Endothelial cell of umbilical vein (primary cell): ENCODE measurements at regions of chr17 and their contacts with region 1.

Region 1: DNA sequence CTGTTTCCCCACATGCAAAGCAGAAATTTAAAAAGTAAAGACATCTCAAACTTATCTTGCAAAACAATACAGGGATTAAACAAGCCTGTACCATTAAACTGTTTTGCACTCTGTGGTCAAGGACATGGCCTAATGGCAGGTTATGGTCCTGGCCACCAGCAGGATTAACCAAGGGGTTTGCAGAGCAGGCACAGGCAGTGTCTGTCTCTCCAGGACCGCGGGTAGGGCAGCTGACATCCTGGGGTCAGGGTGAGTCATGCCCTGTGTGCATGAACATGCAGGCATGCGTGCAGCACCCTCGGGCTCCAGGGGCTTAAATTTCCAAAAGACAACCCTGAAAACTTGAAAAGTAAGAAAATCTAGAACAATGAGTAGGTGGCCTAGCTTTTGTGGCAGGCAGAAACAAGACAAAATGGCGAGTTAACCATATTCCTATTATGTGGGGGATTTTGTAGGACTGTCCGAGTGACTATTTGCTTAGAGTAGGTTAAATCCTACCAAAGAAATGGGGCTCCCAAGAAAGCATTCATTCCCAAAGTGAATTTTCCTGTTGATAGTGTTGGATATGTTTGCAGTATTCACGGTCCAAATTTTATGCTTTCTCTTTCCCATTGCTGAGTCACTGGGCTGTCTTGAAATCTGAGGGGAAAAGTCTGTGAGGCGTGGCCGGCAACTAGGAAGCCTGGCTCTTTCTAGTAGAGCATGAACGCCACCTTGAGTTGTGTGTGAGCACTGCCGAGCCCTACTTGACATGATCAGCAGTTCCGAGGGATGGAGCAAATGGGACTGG is 158.4 kb upstream of the FAM20A start:
- DNase-seq: peak; percentile 91
- H3K4me3 ChIP-seq: peak overlapping the region; percentile 17 to 89 (median 73)
- H3K27ac ChIP-seq: peak overlapping the region; percentile 90
- H3K4me1 ChIP-seq: peaks cover 9% of the 10 kb centered on the region
- H3K27me3 ChIP-seq: no peaks in the 10 kb centered on the region
- CTCF ChIP-seq: peak; percentile 92 to 93
- POLR2A ChIP-seq: no peak

Region 2: DNA sequence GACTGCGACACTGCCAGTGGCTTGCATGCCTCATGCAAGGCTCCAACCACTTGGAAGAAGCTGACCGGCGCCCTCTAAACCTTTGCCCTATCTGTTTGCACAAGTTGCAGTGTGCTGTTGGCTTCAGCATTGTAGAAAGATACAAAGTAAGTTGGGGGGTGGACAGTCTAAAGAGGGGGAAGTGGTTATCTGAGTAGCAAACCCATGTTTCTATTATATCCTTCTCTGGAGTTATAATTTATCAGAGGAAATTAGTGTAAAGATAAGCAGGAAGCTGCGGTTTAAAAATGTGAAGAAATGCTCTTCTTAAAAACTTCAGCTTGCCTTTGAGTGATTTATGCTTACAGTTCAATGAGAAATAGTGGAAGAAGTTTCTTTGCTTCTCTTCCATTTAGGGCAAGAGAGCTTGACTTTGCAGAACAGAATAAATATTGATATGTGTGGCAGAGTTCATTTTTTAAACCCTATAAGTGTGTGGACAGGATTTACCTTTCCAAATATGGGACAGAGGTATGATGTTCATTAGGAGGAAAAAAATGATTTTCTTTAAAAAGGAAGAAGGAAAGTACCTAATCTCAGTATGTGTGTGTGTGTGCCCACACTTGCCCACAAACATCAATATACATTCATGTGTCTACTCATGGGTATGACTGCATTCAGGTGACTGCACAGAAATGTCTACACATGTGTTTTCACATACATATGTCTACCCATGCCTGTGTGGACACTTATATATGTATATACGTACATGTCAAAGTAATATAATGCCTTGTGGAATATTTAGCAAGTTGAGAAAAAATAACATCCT is 503.6 kb before region 1 on chr17:
- CTCF ChIA-PET with region 1: no interaction called
- POLR2A ChIA-PET with region 1: no interaction called
- dilution Hi-C with region 1: no loop called
- intact Hi-C with region 1: loop called (anchors 5 kb)
- DNase-seq: no peak
- H3K4me3 ChIP-seq: no peak overlapping the region
- H3K27ac ChIP-seq: no peak overlapping the region
- H3K4me1 ChIP-seq: peaks cover 20% of the 10 kb centered on the region
- H3K27me3 ChIP-seq: no peaks in the 10 kb centered on the region
- CTCF ChIP-seq: no peak
- POLR2A ChIP-seq: no peak

Region 3: DNA sequence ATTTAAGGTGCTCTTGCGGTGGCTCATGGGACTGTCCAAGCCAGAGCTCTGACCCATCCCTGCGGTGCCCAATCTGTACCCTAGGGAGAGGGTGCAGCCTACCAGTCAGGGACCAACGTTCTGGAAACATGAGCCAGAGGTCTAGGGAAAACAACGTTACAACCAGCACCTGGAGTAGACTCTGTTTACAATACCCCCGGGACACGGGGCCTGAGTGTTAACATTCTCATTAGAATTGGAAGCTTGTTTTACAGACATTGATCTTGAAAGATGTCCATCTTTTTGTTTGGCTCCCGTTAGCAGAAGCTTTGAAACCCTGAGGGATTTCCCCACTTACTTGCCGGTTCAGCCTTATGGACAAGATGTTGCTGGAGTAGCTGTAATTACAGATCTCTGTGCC is 309.1 kb before region 1 on chr17:
- CTCF ChIA-PET with region 1: no interaction called
- POLR2A ChIA-PET with region 1: no interaction called
- dilution Hi-C with region 1: no loop called
- intact Hi-C with region 1: no loop called
- DNase-seq: no peak
- H3K4me3 ChIP-seq: no peak overlapping the region
- H3K27ac ChIP-seq: no peak overlapping the region
- H3K4me1 ChIP-seq: no peaks in the 10 kb centered on the region
- H3K27me3 ChIP-seq: no peaks in the 10 kb centered on the region
- CTCF ChIP-seq: no peak
- POLR2A ChIP-seq: no peak

Region 4: GRCh38 chr17:68468334-68468733 is 291.2 kb before region 1 on chr17:
- CTCF ChIA-PET with region 1: interaction called, 17 read pairs
- POLR2A ChIA-PET with region 1: no interaction called
- dilution Hi-C with region 1: no loop called
- intact Hi-C with region 1: loop called (anchors 1 kb)
- DNase-seq: no peak
- H3K4me3 ChIP-seq: no peak overlapping the region
- H3K27ac ChIP-seq: no peak overlapping the region
- H3K4me1 ChIP-seq: no peaks in the 10 kb centered on the region
- H3K27me3 ChIP-seq: peaks cover 6 to 8% of the 10 kb centered on the region in 2 experiments
- CTCF ChIP-seq: no peak
- POLR2A ChIP-seq: no peak

Region 5: DNA sequence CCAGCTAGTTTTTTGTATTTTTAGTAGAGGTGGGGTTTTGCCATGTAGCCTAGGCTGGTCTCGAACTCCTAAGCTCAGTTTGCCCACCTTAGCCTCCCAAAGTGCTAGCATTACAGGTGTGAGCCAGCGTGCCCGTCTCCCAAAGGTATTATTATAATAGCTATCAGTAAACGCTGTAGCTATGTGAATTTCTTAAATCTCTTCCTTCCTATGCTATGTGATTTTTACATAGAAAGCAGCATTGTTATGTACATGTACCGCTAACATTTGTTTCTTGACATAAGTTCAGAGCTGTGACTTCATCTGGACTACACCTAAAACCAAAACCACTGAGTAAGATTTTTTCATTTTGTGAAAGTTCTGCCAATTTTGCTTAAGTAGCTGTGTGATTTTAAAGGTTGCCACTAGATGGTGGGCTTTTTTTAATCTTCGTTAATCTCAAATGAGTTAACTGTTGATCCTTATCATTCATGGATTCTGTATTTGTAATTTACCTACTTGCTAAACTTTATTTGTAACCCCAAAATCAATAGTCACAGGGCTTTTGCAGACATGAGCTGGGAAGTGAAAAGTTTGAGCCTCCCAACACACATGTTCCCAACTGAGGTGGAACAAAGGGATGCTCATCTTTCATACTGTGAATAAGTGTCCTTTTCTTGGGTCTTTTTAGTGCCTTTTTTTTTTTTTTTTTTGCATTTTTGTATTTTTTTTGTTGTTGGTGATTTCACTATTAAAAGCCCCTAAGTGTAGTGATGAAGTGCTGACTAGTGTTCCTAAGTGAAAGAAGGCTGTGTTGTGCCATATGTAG is 225.4 kb before region 1 on chr17:
- CTCF ChIA-PET with region 1: interaction called, 40 read pairs
- POLR2A ChIA-PET with region 1: no interaction called
- dilution Hi-C with region 1: no loop called
- intact Hi-C with region 1: loop called (anchors 1 kb)
- DNase-seq: peak; percentile 29
- H3K4me3 ChIP-seq: no peak overlapping the region
- H3K27ac ChIP-seq: no peak overlapping the region
- H3K4me1 ChIP-seq: no peaks in the 10 kb centered on the region
- H3K27me3 ChIP-seq: no peaks in the 10 kb centered on the region
- CTCF ChIP-seq: peak; percentile 12 to 13
- POLR2A ChIP-seq: no peak

Region 6: DNA sequence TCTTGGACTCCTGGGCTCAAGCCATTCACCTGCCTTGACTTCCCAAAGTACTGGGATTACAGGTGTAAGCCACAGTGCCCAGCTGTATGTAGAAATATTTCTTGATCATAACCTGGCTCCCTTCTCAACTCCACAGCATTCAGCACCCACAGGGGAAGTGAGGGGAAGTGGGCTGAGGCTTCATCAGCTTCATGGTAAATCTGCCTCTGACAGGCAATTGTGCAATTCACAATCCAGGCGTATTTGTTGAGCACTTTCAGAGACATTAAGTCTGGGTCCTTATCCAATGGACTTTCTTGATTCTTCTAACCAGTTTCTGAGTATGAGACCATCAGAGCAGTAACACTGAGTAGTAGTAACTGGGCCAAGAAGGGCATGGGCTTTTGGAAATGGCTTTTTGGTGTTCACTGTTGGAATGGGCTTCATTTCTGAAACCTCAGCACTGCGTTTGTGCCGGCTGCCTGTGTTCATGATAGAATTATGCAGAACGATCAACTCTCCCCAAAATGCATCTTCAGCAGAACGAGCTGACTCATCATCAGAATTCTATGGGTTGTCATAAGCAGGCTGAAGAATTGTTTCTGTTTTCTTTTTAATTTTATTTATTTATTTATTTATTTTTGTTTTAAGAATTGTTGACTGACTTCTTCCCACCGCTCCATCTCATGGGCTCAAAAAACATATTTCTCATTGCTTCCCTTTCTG is 187.2 kb before region 1 on chr17:
- CTCF ChIA-PET with region 1: no interaction called
- POLR2A ChIA-PET with region 1: no interaction called
- dilution Hi-C with region 1: no loop called
- intact Hi-C with region 1: no loop called
- DNase-seq: no peak
- H3K4me3 ChIP-seq: no peak overlapping the region
- H3K27ac ChIP-seq: no peak overlapping the region
- H3K4me1 ChIP-seq: no peaks in the 10 kb centered on the region
- H3K27me3 ChIP-seq: peaks cover 0 to under 1% of the 10 kb centered on the region in 2 experiments
- CTCF ChIP-seq: no peak
- POLR2A ChIP-seq: no peak

Region 7: GRCh38 chr17:68613739-68614298 is 145.7 kb before region 1 on chr17:
- CTCF ChIA-PET with region 1: no interaction called
- POLR2A ChIA-PET with region 1: no interaction called
- dilution Hi-C with region 1: no loop called
- intact Hi-C with region 1: loop called (anchors 1 kb)
- DNase-seq: peak; percentile 28
- H3K4me3 ChIP-seq: no peak overlapping the region
- H3K27ac ChIP-seq: no peak overlapping the region
- H3K4me1 ChIP-seq: no peaks in the 10 kb centered on the region
- H3K27me3 ChIP-seq: no peaks in the 10 kb centered on the region
- CTCF ChIP-seq: peak; percentile 45 to 56
- POLR2A ChIP-seq: no peak

Region 8: GRCh38 chr17:69117855-69118784 is 358.6 kb after region 1 on chr17:
- CTCF ChIA-PET with region 1: no interaction called
- POLR2A ChIA-PET with region 1: no interaction called
- dilution Hi-C with region 1: no loop called
- intact Hi-C with region 1: no loop called
- DNase-seq: peak; percentile 40
- H3K4me3 ChIP-seq: no peak overlapping the region
- H3K27ac ChIP-seq: no peak overlapping the region
- H3K4me1 ChIP-seq: peaks cover 5% of the 10 kb centered on the region
- H3K27me3 ChIP-seq: no peaks in the 10 kb centered on the region
- CTCF ChIP-seq: no peak
- POLR2A ChIP-seq: no peak